GM10248 (cell line): ENCODE measurements at regions of chr5 and their contacts with region 1.

Region 1: GRCh38 chr5:113378959-113379541 is 55.7 kb downstream of the TSSK1B start:
- DNase-seq: peak; percentile 60
- CTCF ChIP-seq: peak; percentile 84

Region 2: GRCh38 chr5:113357696-113358476 is 21.2 kb before region 1 on chr5:
- CTCF ChIA-PET with region 1: interaction called, 14 read pairs
- POLR2A ChIA-PET with region 1: no interaction called
- DNase-seq: no peak
- CTCF ChIP-seq: no peak

Region 3: DNA sequence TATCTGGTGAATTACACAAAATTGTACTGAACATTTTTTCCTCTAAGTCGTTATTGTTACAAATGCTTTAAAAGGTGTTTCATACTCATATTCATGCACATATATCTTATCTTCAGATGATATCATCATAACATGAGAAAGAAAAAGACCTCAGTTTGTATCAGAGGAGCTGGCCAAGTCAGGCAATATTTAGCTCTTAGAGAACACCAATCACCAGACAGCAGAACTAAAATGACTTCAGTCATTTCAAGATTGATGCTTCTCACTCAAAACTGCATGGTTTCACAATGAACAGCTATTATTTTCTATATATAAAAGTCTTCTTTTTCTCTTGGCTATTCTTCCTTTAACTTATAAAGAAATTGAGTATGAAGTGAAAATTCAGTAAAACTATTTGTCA is 11.2 kb after region 1 on chr5:
- CTCF ChIA-PET with region 1: interaction called, 26 read pairs
- POLR2A ChIA-PET with region 1: no interaction called
- DNase-seq: no peak
- CTCF ChIP-seq: no peak

Region 4: DNA sequence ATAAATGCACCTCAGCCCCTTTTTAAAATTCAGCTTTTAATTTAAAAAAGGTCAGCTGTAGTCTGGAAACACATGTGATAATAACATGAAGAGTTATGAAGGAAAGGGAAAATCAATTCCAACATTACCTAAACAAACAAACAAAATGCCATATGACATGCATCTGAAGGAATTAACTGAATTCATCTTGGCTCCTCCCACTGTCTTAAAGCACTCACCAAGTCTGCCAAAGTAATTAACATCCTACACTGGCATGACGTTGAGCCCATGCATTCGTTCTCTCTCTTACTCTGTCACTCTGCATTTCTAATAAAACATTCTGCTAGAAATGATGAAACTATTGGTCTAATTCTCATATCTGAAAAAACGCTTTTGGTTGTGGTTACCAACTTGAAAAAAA is 18.0 kb after region 1 on chr5:
- CTCF ChIA-PET with region 1: interaction called, 26 read pairs
- POLR2A ChIA-PET with region 1: no interaction called
- DNase-seq: no peak
- CTCF ChIP-seq: no peak

Region 5: GRCh38 chr5:113510836-113511451 is 131.9 kb after region 1 on chr5:
- CTCF ChIA-PET with region 1: interaction called, 14 read pairs
- POLR2A ChIA-PET with region 1: no interaction called
- DNase-seq: peak; percentile 29
- CTCF ChIP-seq: peak; percentile 49

Region 6: DNA sequence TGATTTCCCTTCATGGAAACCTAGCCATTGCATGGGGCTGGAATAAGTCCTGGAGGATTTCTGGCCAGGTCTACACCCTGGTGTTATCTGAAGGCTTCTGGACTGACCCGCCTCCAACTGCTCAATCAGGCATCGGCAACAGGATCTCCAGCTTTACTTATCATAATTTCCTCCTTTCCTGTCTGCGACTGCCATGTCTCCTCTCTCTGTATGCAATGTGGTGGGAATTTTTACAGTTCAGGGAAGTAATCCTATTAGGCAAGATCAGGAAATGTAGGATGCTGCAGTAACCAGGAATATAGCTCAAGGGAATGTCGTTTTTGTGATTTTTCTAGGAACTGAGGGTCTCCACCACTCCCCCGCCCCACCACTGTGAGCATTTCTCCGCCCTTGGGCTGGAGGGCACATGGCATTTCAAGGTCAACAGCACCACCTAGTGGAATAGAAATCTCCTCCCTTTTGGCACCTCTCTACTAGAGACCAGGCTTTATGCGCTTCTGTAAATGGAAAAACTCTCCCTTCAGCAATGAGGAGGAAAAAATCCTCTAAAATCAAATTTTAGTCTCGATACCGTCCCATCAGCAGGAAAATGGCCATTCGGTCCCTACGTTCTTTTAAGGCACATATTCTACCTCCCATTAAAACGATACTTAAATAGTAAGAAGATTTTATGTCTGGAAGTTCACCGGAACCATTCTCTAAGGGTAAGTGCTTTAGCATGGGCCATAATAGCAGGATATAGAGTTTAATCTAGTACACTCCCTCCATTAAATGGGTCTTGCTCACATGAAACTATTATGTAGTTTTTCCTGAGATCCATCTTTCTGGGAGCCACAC is 227.5 kb after region 1 on chr5:
- CTCF ChIA-PET with region 1: interaction called, 84 read pairs
- POLR2A ChIA-PET with region 1: no interaction called
- DNase-seq: peak; percentile 32
- CTCF ChIP-seq: peak; percentile 67